ENCODE measurements at regions of chr1 and their contacts with region 1.

Region 1: GRCh38 chr1:156154317-156154749 is 948 bp downstream of the SEMA4A start:
- DNase-seq: no peak
- H3K4me3 ChIP-seq: no peak overlapping the region
- CTCF ChIP-seq: no peak
- POLR2A ChIP-seq: no peak

Region 2: DNA sequence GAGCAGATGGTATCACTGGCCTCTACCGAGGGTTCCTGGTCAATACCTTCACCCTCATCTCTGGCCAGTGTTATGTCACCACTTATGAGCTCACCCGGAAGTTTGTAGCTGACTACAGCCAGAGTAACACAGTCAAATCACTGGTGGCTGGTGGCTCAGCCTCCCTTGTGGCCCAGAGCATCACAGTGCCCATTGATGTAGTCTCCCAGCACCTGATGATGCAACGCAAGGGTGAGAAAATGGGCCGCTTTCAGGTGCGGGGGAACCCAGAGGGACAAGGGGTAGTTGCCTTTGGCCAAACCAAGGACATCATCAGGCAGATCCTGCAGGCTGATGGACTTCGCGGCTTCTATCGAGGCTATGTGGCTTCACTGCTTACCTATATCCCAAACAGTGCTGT is 45.7 kb after region 1 on chr1:
- intact Hi-C with region 1: loop called (anchors 10 kb)
- DNase-seq: no peak
- H3K4me3 ChIP-seq: no peak overlapping the region
- CTCF ChIP-seq: no peak
- POLR2A ChIP-seq: no peak

Measured in lower leg skin (tissue), 4 donors.